Lower leg skin (tissue), 4 donors: ENCODE measurements at regions of chr18 and their contacts with region 1.

Region 1: DNA sequence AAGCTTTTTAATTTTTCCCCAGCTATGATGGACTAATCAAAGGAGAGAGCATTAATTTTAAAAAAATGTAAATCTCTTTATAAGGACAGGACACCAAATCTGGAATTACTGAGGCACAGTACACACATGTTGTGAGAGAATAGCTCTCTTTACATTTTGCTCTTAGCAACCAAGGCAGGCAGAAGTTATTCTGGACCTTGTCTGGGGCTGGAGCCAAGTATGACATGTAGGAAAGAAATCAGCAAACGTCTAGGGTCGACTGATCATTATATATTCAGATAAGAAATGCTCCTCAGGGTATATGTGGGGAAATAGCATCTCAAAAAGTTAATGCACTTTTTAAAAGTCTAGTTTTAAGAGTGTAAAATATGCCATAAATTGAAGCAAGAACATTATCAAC is 1330.0 kb upstream of the CELF4 start:
- DNase-seq: no peak
- H3K4me3 ChIP-seq: no peak overlapping the region
- CTCF ChIP-seq: no peak
- POLR2A ChIP-seq: no peak

Region 2: GRCh38 chr18:37314534-37314933 is 1581.0 kb before region 1 on chr18:
- intact Hi-C with region 1: loop called (anchors 5 kb)
- DNase-seq: no peak
- H3K4me3 ChIP-seq: no peak overlapping the region
- CTCF ChIP-seq: no peak
- POLR2A ChIP-seq: no peak